ENCODE measurements at regions of chr2 and their contacts with region 1.

Region 1: GRCh38 chr2:38377050-38377828 is at the start of gene ATL2:
- DNase-seq: peak; percentile 98
- H3K4me3 ChIP-seq: peak within 1 kb of the TSS; percentile 74 to 94 (median 89)
- H3K27ac ChIP-seq: peak within 1 kb of the TSS; percentile 98 to 99 (median 98)
- H3K4me1 ChIP-seq: peaks cover 6 to 40% (median 26%) of the 10 kb centered on the region in 4 donors
- H3K27me3 ChIP-seq: no peaks in the 10 kb centered on the region
- CTCF ChIP-seq: no peak
- EP300 ChIP-seq: no peak
- POLR2A ChIP-seq: peak; percentile 94
- total RNA-seq, gene ATL2: 17.6 to 150 (median 69.1) TPM

Region 2: DNA sequence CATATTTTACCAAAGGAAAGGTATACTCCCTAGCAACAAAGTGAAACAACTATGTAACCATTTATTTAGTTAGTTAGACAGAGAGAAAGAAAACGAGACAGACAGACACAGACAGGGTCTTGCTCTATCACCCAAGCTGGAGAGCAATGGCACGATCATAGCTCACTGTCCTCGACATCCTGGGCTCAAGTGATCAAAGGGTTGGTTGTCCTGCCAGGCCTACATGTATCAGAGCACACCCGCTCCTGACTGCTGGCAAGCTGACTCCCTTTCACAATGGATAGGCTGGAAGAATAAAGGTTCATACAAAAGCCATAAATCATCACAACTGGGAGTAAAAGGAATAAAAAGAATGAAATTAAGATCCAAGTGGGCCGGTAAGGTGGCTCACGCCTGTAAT is 53.6 kb before region 1 on chr2:
- in situ Hi-C with region 1: no loop called
- intact Hi-C with region 1: loop called (anchors 5 kb)
- DNase-seq: no peak
- H3K4me3 ChIP-seq: no peak overlapping the region
- H3K27ac ChIP-seq: no peak overlapping the region
- H3K4me1 ChIP-seq: peaks cover 0 to 33% (median 8%) of the 10 kb centered on the region in 4 donors
- H3K27me3 ChIP-seq: no peaks in the 10 kb centered on the region
- CTCF ChIP-seq: no peak
- EP300 ChIP-seq: no peak
- POLR2A ChIP-seq: no peak

Region 3: GRCh38 chr2:38465789-38466127 is 88.5 kb after region 1 on chr2:
- in situ Hi-C with region 1: no loop called
- intact Hi-C with region 1: loop called (anchors 2 kb)
- DNase-seq: peak; percentile 35
- H3K4me3 ChIP-seq: no peak overlapping the region
- H3K27ac ChIP-seq: peak overlapping the region; percentile 61 to 81 (median 77)
- H3K4me1 ChIP-seq: peaks cover 5 to 57% (median 18%) of the 10 kb centered on the region in 4 donors
- H3K27me3 ChIP-seq: no peaks in the 10 kb centered on the region
- CTCF ChIP-seq: peak; percentile 16 to 48 (median 42)
- EP300 ChIP-seq: no peak
- POLR2A ChIP-seq: no peak

Region 4: GRCh38 chr2:38515160-38516074 is 138.2 kb after region 1 on chr2:
- in situ Hi-C with region 1: no loop called
- intact Hi-C with region 1: loop called (anchors 10 kb)
- DNase-seq: peak; percentile 31
- H3K4me3 ChIP-seq: peak overlapping the region in 2 of 4 donors; percentile 0 to 13
- H3K27ac ChIP-seq: peak overlapping the region; percentile 58 to 85 (median 76)
- H3K4me1 ChIP-seq: peaks cover 0 to 6% (median 0%) of the 10 kb centered on the region in 4 donors
- H3K27me3 ChIP-seq: no peaks in the 10 kb centered on the region
- CTCF ChIP-seq: no peak
- EP300 ChIP-seq: no peak
- POLR2A ChIP-seq: no peak